ENCODE measurements at regions of chr1 and their contacts with region 1.

Region 1: DNA sequence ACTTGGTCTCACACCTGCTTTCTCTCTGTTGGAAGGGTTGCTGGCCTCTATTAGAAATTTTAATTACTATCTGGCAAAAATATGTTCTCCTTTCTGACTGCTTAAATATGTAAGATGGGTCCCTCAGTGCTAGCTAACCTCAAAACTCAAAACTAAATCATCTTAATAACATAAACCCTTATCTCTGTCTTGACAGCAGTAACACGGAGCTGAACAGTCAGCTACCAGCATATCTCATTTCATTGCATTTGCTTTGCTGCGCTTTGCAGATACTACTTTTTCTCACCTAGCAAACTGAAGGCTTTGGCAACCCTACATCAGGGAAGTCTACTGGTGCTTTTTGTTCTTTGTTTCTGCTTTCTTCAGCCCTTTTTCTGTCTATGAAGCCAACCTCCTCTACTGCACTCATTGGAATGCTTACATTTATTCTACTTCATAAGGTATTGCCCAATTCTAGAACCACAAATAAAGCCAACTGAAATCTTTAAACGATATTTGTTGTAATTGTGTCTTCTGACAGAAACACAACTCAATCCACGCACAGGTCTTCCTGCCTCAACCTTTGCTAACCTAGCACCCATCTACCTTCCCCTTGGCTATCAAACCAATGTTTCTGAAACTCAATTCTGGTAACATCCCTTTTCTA is 95.6 kb downstream of the RERE start:
- DNase-seq: no peak
- ATAC-seq: no peak
- H3K4me3 ChIP-seq: no peak overlapping the region
- H3K4me3 Mint-ChIP-seq: no peak overlapping the region
- H3K27ac ChIP-seq: no peak overlapping the region
- H3K27ac Mint-ChIP-seq: no peak overlapping the region
- H3K4me1 ChIP-seq: no peaks in the 10 kb centered on the region
- H3K4me1 Mint-ChIP-seq: peaks cover 30% of the 10 kb centered on the region
- H3K27me3 ChIP-seq: no peaks in the 10 kb centered on the region
- H3K27me3 Mint-ChIP-seq: no peaks in the 10 kb centered on the region
- CTCF ChIP-seq: no peak

Region 2: DNA sequence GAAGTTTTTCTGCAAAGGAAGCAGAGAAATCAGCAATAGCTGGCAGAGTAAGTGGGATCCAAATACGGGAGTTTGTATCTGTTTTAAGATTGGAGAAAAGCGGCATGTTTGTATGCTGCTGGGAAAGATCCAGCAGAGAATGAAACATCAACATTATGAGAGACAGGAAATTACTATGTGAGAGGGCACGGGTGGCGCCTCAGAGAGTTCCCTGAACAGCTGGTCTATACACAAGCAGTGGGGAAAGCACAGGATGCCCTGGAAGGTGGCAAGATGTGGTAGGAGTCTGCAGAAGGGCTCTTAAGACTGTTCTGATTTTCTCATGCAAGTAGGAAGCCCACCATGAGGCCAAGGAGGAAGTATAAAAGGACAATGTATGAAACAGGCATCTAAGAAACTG is 34.8 kb before region 1 on chr1:
- CTCF ChIA-PET with region 1: no interaction called
- POLR2A ChIA-PET with region 1: no interaction called
- intact Hi-C with region 1: loop called in 1 of 2 experiments (anchors 5 kb)
- DNase-seq: no peak
- ATAC-seq: no peak
- H3K4me3 ChIP-seq: no peak overlapping the region
- H3K4me3 Mint-ChIP-seq: no peak overlapping the region
- H3K27ac ChIP-seq: no peak overlapping the region
- H3K27ac Mint-ChIP-seq: no peak overlapping the region
- H3K4me1 ChIP-seq: peaks cover under 1% of the 10 kb centered on the region
- H3K4me1 Mint-ChIP-seq: peaks cover 8% of the 10 kb centered on the region
- H3K27me3 ChIP-seq: no peaks in the 10 kb centered on the region
- H3K27me3 Mint-ChIP-seq: no peaks in the 10 kb centered on the region
- CTCF ChIP-seq: no peak

Measured in CD4-positive, alpha-beta T cell (primary cell).